CD4-positive, alpha-beta memory T cell (primary cell): ENCODE measurements at regions of chr1 and their contacts with region 1.

Region 1: GRCh38 chr1:151254217-151255213 is at the start of gene PSMD4:
- DNase-seq: peak; percentile 93 to 96 (median 94)
- H3K4me3 ChIP-seq: peak within 1 kb of the TSS; percentile 53 to 88
- H3K4me3 Mint-ChIP-seq: peak within 1 kb of the TSS; percentile 92 to 100 (median 96)
- H3K27ac ChIP-seq: peak within 1 kb of the TSS; percentile 65
- H3K27ac Mint-ChIP-seq: peak within 1 kb of the TSS; percentile 95 to 99 (median 97)
- H3K4me1 ChIP-seq: peaks cover 26% of the 10 kb centered on the region
- H3K4me1 Mint-ChIP-seq: peaks cover 25 to 47% (median 34%) of the 10 kb centered on the region in 4 donors
- H3K27me3 ChIP-seq: no peaks in the 10 kb centered on the region
- H3K27me3 Mint-ChIP-seq: no peaks in the 10 kb centered on the region
- total RNA-seq, gene PSMD4: 143 to 151 TPM

Region 2: GRCh38 chr1:151024540-151025146 is 229.9 kb before region 1 on chr1:
- CTCF ChIA-PET with region 1: interaction called, 4 read pairs
- POLR2A ChIA-PET with region 1: no interaction called
- intact Hi-C with region 1: loop called (anchors 1 kb)
- DNase-seq: peak; percentile 81 to 86 (median 85)
- H3K4me3 ChIP-seq: no peak overlapping the region
- H3K4me3 Mint-ChIP-seq: peak overlapping the region in 5 of 8 donors; percentile 22 to 65 (median 54)
- H3K27ac ChIP-seq: no peak overlapping the region
- H3K27ac Mint-ChIP-seq: peak overlapping the region; percentile 41 to 86 (median 73)
- H3K4me1 ChIP-seq: peaks cover 7% of the 10 kb centered on the region
- H3K4me1 Mint-ChIP-seq: peaks cover 5 to 11% (median 6%) of the 10 kb centered on the region in 4 donors
- H3K27me3 ChIP-seq: no peaks in the 10 kb centered on the region
- H3K27me3 Mint-ChIP-seq: no peaks in the 10 kb centered on the region

Region 3: DNA sequence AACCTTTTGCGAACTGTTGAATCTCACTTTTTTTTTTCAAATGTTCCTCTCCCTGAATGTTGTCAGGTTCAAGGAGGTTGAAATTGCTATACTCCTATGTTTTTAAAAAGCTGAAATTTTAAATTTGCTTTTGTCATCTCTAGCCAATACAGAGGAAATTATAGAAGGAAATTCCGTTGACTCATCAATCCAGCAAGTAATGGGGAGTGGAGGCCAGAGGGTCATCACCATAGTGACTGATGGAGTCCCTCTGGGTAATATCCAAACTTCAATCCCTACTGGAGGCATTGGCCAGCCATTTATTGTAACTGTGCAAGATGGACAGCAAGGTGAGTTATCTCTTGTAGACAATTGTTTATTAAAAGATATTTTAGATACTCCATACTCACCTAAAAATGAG is 147.6 kb before region 1 on chr1:
- CTCF ChIA-PET with region 1: interaction called, 71 read pairs
- POLR2A ChIA-PET with region 1: interaction called, 3 read pairs
- intact Hi-C with region 1: no loop called
- DNase-seq: no peak
- H3K4me3 ChIP-seq: no peak overlapping the region
- H3K4me3 Mint-ChIP-seq: no peak overlapping the region
- H3K27ac ChIP-seq: no peak overlapping the region
- H3K27ac Mint-ChIP-seq: peak overlapping the region in 1 of 7 donors; percentile 31
- H3K4me1 ChIP-seq: no peaks in the 10 kb centered on the region
- H3K4me1 Mint-ChIP-seq: no peaks in the 10 kb centered on the region
- H3K27me3 ChIP-seq: no peaks in the 10 kb centered on the region
- H3K27me3 Mint-ChIP-seq: no peaks in the 10 kb centered on the region

Region 4: GRCh38 chr1:151189638-151190445 is 64.7 kb before region 1 on chr1 and contains the start of gene VPS72:
- CTCF ChIA-PET with region 1: interaction called, 20 read pairs
- POLR2A ChIA-PET with region 1: interaction called, 16 read pairs
- intact Hi-C with region 1: no loop called
- DNase-seq: peak; percentile 81 to 92 (median 84)
- H3K4me3 ChIP-seq: peak within 1 kb of the TSS; percentile 67 to 78
- H3K4me3 Mint-ChIP-seq: peak within 1 kb of the TSS; percentile 92 to 100 (median 98)
- H3K27ac ChIP-seq: peak within 1 kb of the TSS; percentile 89
- H3K27ac Mint-ChIP-seq: peak within 1 kb of the TSS; percentile 91 to 100 (median 98)
- H3K4me1 ChIP-seq: peaks cover 25% of the 10 kb centered on the region
- H3K4me1 Mint-ChIP-seq: peaks cover 22 to 43% (median 33%) of the 10 kb centered on the region in 4 donors
- H3K27me3 ChIP-seq: no peaks in the 10 kb centered on the region
- H3K27me3 Mint-ChIP-seq: no peaks in the 10 kb centered on the region
- total RNA-seq, gene VPS72: 68.1 to 68.4 TPM

Region 5: GRCh38 chr1:151235235-151235634 is 19.3 kb before region 1 on chr1:
- CTCF ChIA-PET with region 1: interaction called, 10 read pairs
- POLR2A ChIA-PET with region 1: interaction called, 3 read pairs
- intact Hi-C with region 1: no loop called
- DNase-seq: no peak
- H3K4me3 ChIP-seq: no peak overlapping the region
- H3K4me3 Mint-ChIP-seq: no peak overlapping the region
- H3K27ac ChIP-seq: no peak overlapping the region
- H3K27ac Mint-ChIP-seq: peak overlapping the region in 2 of 7 donors; percentile 48 to 50
- H3K4me1 ChIP-seq: no peaks in the 10 kb centered on the region
- H3K4me1 Mint-ChIP-seq: peaks cover 0 to 4% (median 0%) of the 10 kb centered on the region in 4 donors
- H3K27me3 ChIP-seq: no peaks in the 10 kb centered on the region
- H3K27me3 Mint-ChIP-seq: no peaks in the 10 kb centered on the region

Region 6: GRCh38 chr1:151327223-151327902 is 72.8 kb after region 1 on chr1 and contains the start of gene PI4KB:
- CTCF ChIA-PET with region 1: interaction called, 3 read pairs
- POLR2A ChIA-PET with region 1: interaction called, 10 read pairs
- intact Hi-C with region 1: no loop called
- DNase-seq: peak; percentile 95 to 97 (median 97)
- H3K4me3 ChIP-seq: peak within 1 kb of the TSS; percentile 74 to 79
- H3K4me3 Mint-ChIP-seq: peak within 1 kb of the TSS; percentile 92 to 98 (median 97)
- H3K27ac ChIP-seq: peak within 1 kb of the TSS; percentile 84
- H3K27ac Mint-ChIP-seq: peak within 1 kb of the TSS; percentile 90 to 99 (median 99)
- H3K4me1 ChIP-seq: peaks cover 35% of the 10 kb centered on the region
- H3K4me1 Mint-ChIP-seq: peaks cover 31 to 57% (median 40%) of the 10 kb centered on the region in 4 donors
- H3K27me3 ChIP-seq: no peaks in the 10 kb centered on the region
- H3K27me3 Mint-ChIP-seq: no peaks in the 10 kb centered on the region
- total RNA-seq, gene PI4KB: 87.2 to 97.4 TPM

Region 7: GRCh38 chr1:151346769-151347522 is 92.4 kb after region 1 on chr1 and contains the start of gene RFX5:
- CTCF ChIA-PET with region 1: interaction called, 3 read pairs
- POLR2A ChIA-PET with region 1: no interaction called
- intact Hi-C with region 1: loop called (anchors 2 kb)
- DNase-seq: peak; percentile 93 to 98 (median 97)
- H3K4me3 ChIP-seq: peak within 1 kb of the TSS; percentile 59 to 71
- H3K4me3 Mint-ChIP-seq: peak within 1 kb of the TSS; percentile 90 to 98 (median 94)
- H3K27ac ChIP-seq: peak within 1 kb of the TSS; percentile 97
- H3K27ac Mint-ChIP-seq: peak within 1 kb of the TSS; percentile 96 to 100 (median 98)
- H3K4me1 ChIP-seq: peaks cover 28% of the 10 kb centered on the region
- H3K4me1 Mint-ChIP-seq: peaks cover 22 to 41% (median 31%) of the 10 kb centered on the region in 4 donors
- H3K27me3 ChIP-seq: no peaks in the 10 kb centered on the region
- H3K27me3 Mint-ChIP-seq: no peaks in the 10 kb centered on the region
- total RNA-seq, gene RFX5: 56.3 to 64.3 TPM